H1 (cell line): ENCODE measurements at regions of chr17 and their contacts with region 1.

Region 1: GRCh38 chr17:48374650-48375230 is 55.3 kb downstream of the SKAP1 start:
- DNase-seq: peak; percentile 9 to 74
- H3K4me3 ChIP-seq: no peak overlapping the region
- H3K27ac ChIP-seq: no peak overlapping the region
- H3K4me1 ChIP-seq: no peaks in the 10 kb centered on the region
- H3K27me3 ChIP-seq: no peaks in the 10 kb centered on the region; a peak in 1 of 7 replicates
- CTCF ChIP-seq: peak; percentile 90 to 97 (median 91)
- EP300 ChIP-seq: no peak
- POLR2A ChIP-seq: no peak
- RAD21 ChIP-seq: peak; percentile 92 to 97

Region 2: DNA sequence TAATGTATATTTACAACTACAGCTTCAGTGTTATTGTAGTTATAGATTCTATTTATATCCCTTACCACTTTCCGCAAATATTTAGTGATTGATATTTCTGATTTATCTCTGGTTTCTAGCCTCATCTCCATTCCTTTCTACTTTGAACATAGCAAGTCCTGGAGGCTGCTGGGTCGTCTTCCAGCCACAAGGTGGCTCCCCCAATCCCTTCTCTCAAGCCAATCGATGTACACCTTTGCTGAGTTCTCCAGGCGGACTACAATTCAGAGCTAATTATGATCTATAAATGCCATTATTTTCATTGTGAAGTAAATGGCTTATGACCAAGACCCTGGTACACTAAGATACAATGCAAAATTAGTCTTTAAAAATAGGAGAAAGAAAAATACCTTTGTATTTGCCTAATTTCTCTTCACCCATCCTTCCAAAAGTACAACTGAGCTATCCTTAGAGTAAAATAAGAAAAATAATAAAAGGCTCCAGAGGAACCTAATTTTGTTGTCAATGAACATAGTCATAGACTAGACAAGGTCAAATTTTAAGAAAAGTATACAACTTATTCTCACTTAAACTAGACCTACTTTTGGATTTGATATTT is 66.8 kb before region 1 on chr17:
- CTCF ChIA-PET with region 1: interaction called, 18 read pairs
- POLR2A ChIA-PET with region 1: no interaction called
- DNase-seq: peak in 1 of 2 experiments; percentile 15
- H3K4me3 ChIP-seq: no peak overlapping the region
- H3K27ac ChIP-seq: no peak overlapping the region
- H3K4me1 ChIP-seq: no peaks in the 10 kb centered on the region
- H3K27me3 ChIP-seq: no peaks in the 10 kb centered on the region; a peak in 2 of 7 replicates
- CTCF ChIP-seq: peak; percentile 78 to 87 (median 81)
- EP300 ChIP-seq: no peak
- POLR2A ChIP-seq: no peak
- RAD21 ChIP-seq: peak; percentile 58 to 69

Region 3: DNA sequence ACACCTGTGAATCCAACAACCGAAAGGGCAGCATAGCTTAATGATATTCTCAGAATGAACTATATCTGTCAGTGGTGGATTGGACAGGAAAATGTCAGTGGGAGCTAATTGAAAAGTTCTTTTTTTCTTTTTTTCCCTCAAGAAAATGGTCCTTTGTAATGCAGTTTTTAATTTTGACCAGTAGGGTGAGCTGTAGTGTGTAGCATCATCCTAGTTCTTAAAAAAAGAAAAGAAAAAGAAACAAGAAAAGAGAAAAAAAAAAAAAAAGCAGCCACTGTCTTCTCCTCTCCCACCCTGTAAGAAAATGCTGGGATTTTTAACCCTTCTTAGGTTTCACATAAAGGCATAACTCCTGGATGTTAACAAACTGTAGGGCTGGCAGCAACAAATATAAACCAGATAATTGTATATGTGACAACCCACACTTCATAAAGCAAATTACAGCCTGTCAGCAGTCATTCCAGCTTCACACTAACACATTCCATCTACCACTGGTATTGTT is 22.9 kb before region 1 on chr17:
- CTCF ChIA-PET with region 1: interaction called, 21 read pairs
- POLR2A ChIA-PET with region 1: interaction called, 3 read pairs
- DNase-seq: no peak
- H3K4me3 ChIP-seq: no peak overlapping the region
- H3K27ac ChIP-seq: no peak overlapping the region
- H3K4me1 ChIP-seq: no peaks in the 10 kb centered on the region
- H3K27me3 ChIP-seq: no peaks in the 10 kb centered on the region; a peak in 1 of 7 replicates
- CTCF ChIP-seq: peak in 2 of 3 experiments; percentile 33; a peak in 2 of 4 replicates
- EP300 ChIP-seq: no peak
- POLR2A ChIP-seq: no peak
- RAD21 ChIP-seq: peak in 1 of 2 experiments; percentile 51

Region 4: DNA sequence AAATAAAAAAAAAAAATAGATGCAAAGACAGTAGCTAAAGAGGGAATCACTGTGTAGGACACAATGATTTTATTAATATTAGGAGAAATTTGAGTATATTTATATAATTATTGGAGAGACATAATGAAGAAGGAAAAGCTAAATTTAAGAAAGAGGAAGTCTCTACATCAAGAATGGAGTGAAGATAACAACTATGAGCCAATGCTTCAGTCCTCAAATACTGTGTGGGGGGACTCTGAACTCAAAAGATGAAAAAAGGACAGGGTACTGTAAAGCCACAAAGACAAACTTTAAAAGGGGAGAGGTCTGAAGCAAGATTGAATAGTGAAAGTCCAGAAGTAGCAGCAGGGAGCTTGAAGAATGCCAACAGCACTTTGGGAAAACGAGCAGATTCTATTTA is 10.6 kb after region 1 on chr17:
- CTCF ChIA-PET with region 1: interaction called, 17 read pairs
- POLR2A ChIA-PET with region 1: interaction called, 3 read pairs
- DNase-seq: no peak
- H3K4me3 ChIP-seq: no peak overlapping the region
- H3K27ac ChIP-seq: no peak overlapping the region
- H3K4me1 ChIP-seq: no peaks in the 10 kb centered on the region
- H3K27me3 ChIP-seq: no peaks in the 10 kb centered on the region
- CTCF ChIP-seq: no peak
- EP300 ChIP-seq: no peak
- POLR2A ChIP-seq: no peak
- RAD21 ChIP-seq: no peak

Region 5: GRCh38 chr17:48413613-48414405 is 39.1 kb after region 1 on chr17:
- CTCF ChIA-PET with region 1: no interaction called
- POLR2A ChIA-PET with region 1: no interaction called
- DNase-seq: no peak
- H3K4me3 ChIP-seq: no peak overlapping the region
- H3K27ac ChIP-seq: no peak overlapping the region
- H3K4me1 ChIP-seq: peaks cover 0 to 4% (median 1%) of the 10 kb centered on the region in 4 experiments; a peak in 1 of 7 replicates
- H3K27me3 ChIP-seq: peaks cover 0 to 1% (median 0%) of the 10 kb centered on the region in 4 experiments; a peak in 1 of 7 replicates
- CTCF ChIP-seq: no peak
- EP300 ChIP-seq: no peak
- POLR2A ChIP-seq: no peak
- RAD21 ChIP-seq: no peak

Region 6: DNA sequence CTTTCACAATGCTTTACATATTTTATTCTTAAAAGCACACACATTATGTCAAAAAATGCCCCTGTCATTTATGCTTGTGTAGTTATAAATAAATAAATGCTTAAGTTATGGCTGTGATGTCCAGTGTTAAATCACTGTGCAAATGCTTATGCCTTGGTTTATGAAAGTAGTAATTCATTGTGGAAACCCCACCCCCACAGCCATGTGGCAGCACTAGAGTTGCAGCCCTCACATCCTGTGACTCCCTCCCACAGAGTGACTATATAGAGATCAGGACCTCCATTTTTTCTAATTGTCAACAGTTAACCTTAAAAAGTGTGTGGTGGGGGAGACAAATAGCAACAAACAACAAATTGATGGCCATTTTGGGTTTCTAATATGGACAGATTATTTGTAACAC is 52.9 kb after region 1 on chr17:
- CTCF ChIA-PET with region 1: no interaction called
- POLR2A ChIA-PET with region 1: no interaction called
- DNase-seq: no peak
- H3K4me3 ChIP-seq: no peak overlapping the region
- H3K27ac ChIP-seq: no peak overlapping the region
- H3K4me1 ChIP-seq: peaks cover 0 to 3% (median 0%) of the 10 kb centered on the region in 4 experiments; a peak in 2 of 7 replicates
- H3K27me3 ChIP-seq: peaks cover 11 to 31% (median 27%) of the 10 kb centered on the region in 4 experiments
- CTCF ChIP-seq: no peak
- EP300 ChIP-seq: no peak
- POLR2A ChIP-seq: no peak
- RAD21 ChIP-seq: no peak